ENCODE measurements at regions of chr14 and their contacts with region 1.

Region 1: GRCh38 chr14:92651106-92651757 is 97.2 kb downstream of the LGMN start:
- DNase-seq: peak; percentile 83 to 93
- ATAC-seq: peak; percentile 66 to 88 (median 77)
- H3K4me3 ChIP-seq: peak overlapping the region; percentile 72
- H3K4me3 Mint-ChIP-seq: peak overlapping the region; percentile 90
- H3K27ac ChIP-seq: peak overlapping the region; percentile 99
- H3K27ac Mint-ChIP-seq: peak overlapping the region; percentile 96 to 99
- H3K4me1 ChIP-seq: peaks cover 94% of the 10 kb centered on the region
- H3K4me1 Mint-ChIP-seq: peaks cover 75 to 95% of the 10 kb centered on the region in 2 donors
- H3K27me3 ChIP-seq: no peaks in the 10 kb centered on the region
- H3K27me3 Mint-ChIP-seq: no peaks in the 10 kb centered on the region
- CTCF ChIP-seq: no peak

Region 2: GRCh38 chr14:91866061-91866460 is 785.2 kb before region 1 on chr14:
- intact Hi-C with region 1: loop called (anchors 1 kb)
- DNase-seq: peak in 1 of 2 donors; percentile 53
- ATAC-seq: peak in 1 of 3 donors; percentile 7
- H3K4me3 ChIP-seq: peak overlapping the region; percentile 50
- H3K4me3 Mint-ChIP-seq: peak overlapping the region; percentile 100
- H3K27ac ChIP-seq: peak overlapping the region; percentile 62
- H3K27ac Mint-ChIP-seq: peak overlapping the region; percentile 88 to 96
- H3K4me1 ChIP-seq: peaks cover 81% of the 10 kb centered on the region
- H3K4me1 Mint-ChIP-seq: peaks cover 81 to 82% of the 10 kb centered on the region in 2 donors
- H3K27me3 ChIP-seq: no peaks in the 10 kb centered on the region
- H3K27me3 Mint-ChIP-seq: no peaks in the 10 kb centered on the region
- CTCF ChIP-seq: no peak

Region 3: DNA sequence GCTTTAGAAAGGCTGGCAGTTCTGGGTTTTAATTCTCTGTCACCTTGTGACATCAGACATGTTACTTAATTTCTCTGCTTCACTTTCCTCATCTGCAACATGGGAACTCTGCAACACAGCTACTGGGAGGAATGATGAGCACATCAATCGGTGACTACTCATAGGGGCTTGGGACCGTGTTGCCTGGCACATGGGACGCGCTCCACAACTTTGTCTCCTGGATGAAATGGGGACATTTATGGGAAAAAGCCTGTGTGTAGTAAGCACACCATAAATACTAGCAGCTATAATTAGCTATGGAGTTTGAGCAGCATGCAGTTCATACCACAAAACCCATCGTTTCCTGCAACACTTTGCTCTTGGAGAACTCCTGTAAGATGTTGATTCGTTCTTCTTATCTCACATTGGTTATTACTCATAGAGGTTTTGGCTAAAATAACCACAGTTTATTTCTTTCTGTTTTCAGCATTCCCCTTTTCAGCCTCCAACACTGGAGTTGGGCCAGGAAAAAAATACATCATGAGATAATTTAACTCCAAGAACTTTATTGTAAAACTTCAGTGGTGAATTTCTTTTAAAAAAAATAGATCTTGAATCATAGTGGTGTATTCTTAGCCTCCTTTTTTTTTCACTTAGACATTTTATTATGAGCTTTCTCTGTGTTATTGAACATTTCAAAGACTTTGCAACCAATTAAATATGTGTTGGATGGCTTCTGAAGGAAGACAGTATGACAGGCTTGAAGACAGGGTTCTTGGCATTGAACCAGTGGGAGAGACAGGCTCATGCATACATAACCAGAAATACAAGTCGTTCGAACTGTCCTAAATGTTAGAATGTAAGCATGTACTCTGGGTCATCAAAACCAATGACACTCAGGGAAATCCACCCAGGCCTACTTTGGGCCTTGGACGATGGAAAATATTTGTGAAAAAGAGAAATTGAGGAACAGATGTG is 65.0 kb before region 1 on chr14:
- intact Hi-C with region 1: loop called (anchors 1 kb)
- DNase-seq: peak; percentile 45 to 83
- ATAC-seq: peak; percentile 50 to 73 (median 68)
- H3K4me3 ChIP-seq: no peak overlapping the region
- H3K4me3 Mint-ChIP-seq: peak overlapping the region; percentile 84
- H3K27ac ChIP-seq: peak overlapping the region; percentile 83
- H3K27ac Mint-ChIP-seq: peak overlapping the region; percentile 94 to 96
- H3K4me1 ChIP-seq: peaks cover 87% of the 10 kb centered on the region
- H3K4me1 Mint-ChIP-seq: peaks cover 91 to 97% of the 10 kb centered on the region in 2 donors
- H3K27me3 ChIP-seq: no peaks in the 10 kb centered on the region
- H3K27me3 Mint-ChIP-seq: no peaks in the 10 kb centered on the region
- CTCF ChIP-seq: no peak

Region 4: DNA sequence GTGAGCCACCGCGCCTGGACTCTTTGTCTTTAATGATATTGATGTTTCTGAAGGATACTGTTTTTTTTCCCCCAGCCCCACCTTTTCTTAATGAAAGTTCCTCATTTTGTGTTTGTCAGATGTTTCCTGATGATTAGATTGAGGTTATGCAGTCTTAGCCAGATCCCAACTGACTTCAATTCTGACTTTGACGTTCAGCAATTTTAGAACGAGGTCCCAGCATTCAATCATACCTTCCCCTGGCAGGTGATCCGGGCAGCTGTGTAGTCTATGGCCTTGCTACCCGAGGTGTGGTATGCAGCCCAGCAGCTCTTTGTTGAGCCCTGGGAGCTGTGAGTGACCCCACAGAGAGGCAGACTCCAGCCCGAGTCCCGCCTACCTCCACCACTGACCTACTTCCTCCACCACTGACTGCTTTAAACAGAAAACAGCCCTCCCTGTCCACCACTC is 14.5 kb after region 1 on chr14:
- intact Hi-C with region 1: loop called (anchors 2 kb)
- DNase-seq: no peak
- ATAC-seq: peak; percentile 21 to 62 (median 37)
- H3K4me3 ChIP-seq: no peak overlapping the region
- H3K4me3 Mint-ChIP-seq: peak overlapping the region; percentile 68
- H3K27ac ChIP-seq: peak overlapping the region; percentile 69
- H3K27ac Mint-ChIP-seq: peak overlapping the region; percentile 96 to 99
- H3K4me1 ChIP-seq: peaks cover 60% of the 10 kb centered on the region
- H3K4me1 Mint-ChIP-seq: peaks cover 81 to 90% of the 10 kb centered on the region in 2 donors
- H3K27me3 ChIP-seq: no peaks in the 10 kb centered on the region
- H3K27me3 Mint-ChIP-seq: no peaks in the 10 kb centered on the region
- CTCF ChIP-seq: no peak

Region 5: GRCh38 chr14:92719890-92720323 is 68.7 kb after region 1 on chr14:
- intact Hi-C with region 1: loop called (anchors 5 kb)
- DNase-seq: no peak
- ATAC-seq: no peak
- H3K4me3 ChIP-seq: no peak overlapping the region
- H3K4me3 Mint-ChIP-seq: no peak overlapping the region
- H3K27ac ChIP-seq: no peak overlapping the region
- H3K27ac Mint-ChIP-seq: peak overlapping the region in 1 of 2 donors; percentile 68
- H3K4me1 ChIP-seq: peaks cover 22% of the 10 kb centered on the region
- H3K4me1 Mint-ChIP-seq: peaks cover 14% of the 10 kb centered on the region in 2 donors
- H3K27me3 ChIP-seq: no peaks in the 10 kb centered on the region
- H3K27me3 Mint-ChIP-seq: peaks cover 0 to 2% of the 10 kb centered on the region in 2 donors
- CTCF ChIP-seq: no peak

Measured in natural killer cell (primary cell).